Activated CD4-positive, alpha-beta T cell treated with anti-CD3 and anti-CD28 coated beads for 36 hours (primary cell): ENCODE measurements at regions of chr12 and their contacts with region 1.

Region 1: GRCh38 chr12:50111693-50112455 is at the start of gene COX14:
- DNase-seq: peak; percentile 99
- ATAC-seq: peak; percentile 91
- H3K4me3 Mint-ChIP-seq: peak within 1 kb of the TSS; percentile 100
- H3K27ac Mint-ChIP-seq: peak within 1 kb of the TSS; percentile 99
- H3K4me1 Mint-ChIP-seq: peaks cover 38% of the 10 kb centered on the region
- H3K27me3 Mint-ChIP-seq: no peaks in the 10 kb centered on the region
- total RNA-seq, gene COX14: 26.8 to 44.2 TPM

Region 2: DNA sequence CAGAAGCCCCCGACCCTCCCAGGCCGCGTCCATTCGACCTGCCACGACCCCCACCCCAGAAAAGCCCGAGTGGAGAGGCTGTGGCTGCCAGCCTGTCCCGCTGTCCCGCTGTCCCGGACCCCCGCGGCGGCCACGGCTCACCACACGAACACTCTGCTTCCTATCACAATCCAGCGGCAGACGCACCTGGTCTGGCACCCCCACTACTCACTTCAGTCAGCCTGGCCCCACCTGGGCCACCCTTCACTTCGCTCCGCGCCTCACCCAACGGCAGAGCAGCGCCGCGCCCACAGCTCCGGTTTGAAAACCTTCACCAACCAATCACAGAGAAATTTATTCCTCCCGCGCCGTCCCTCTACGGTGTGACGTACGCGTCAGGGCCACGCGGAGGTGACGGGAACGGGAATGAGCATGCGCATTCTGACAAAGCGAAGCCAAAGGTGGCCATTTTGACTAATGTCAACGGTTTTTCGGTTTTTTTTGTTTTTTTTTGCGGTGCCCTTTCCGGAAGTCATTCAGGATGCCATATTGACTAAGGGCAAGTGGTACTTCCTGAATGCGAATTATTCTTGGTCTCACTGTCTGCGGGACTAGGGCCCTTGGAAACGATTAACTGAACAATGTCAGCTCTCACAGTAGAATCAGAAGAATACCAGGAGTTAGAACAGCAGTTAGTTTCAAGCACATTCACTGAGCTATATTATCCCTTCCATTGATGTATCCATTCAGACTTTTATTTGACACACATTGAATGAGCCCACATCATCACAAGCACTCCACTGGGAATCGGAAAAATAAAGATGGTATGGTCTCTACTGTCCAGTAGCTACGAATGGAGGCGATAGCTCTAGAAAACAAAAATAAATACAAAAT is 86.5 kb before region 1 on chr12 and contains the start of gene RACGAP1:
- CTCF ChIA-PET with region 1: interaction called, 4 read pairs
- POLR2A ChIA-PET with region 1: interaction called, 4 read pairs
- intact Hi-C with region 1: loop called (anchors 1 kb)
- DNase-seq: peak; percentile 97
- ATAC-seq: peak; percentile 98
- H3K4me3 Mint-ChIP-seq: peak within 1 kb of the TSS; percentile 90
- H3K27ac Mint-ChIP-seq: peak within 1 kb of the TSS; percentile 95
- H3K4me1 Mint-ChIP-seq: peaks cover 23% of the 10 kb centered on the region
- H3K27me3 Mint-ChIP-seq: no peaks in the 10 kb centered on the region
- total RNA-seq, gene RACGAP1: 99.7 to 118 TPM

Region 3: DNA sequence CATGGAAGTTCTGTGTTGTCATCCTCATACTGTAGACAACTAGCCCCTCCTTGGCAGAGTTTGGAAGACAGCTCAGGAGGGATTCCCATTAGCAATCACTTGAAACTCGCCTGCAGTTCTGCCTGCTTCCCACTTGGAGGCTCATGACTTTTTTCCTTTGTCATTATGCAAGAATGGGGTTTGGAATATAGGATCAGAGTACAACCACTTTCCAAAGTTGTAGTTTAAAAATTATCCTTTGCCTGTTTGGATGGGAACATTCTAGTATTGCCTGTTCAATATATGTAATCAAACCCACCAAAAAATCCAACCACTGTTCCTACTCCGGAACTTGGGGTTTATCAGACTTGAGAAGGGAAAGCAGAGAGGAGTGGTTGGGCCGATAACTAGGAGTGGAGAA is 10.2 kb before region 1 on chr12:
- CTCF ChIA-PET with region 1: interaction called, 58 read pairs
- POLR2A ChIA-PET with region 1: interaction called, 7 read pairs
- intact Hi-C with region 1: no loop called
- DNase-seq: no peak
- ATAC-seq: no peak
- H3K4me3 Mint-ChIP-seq: no peak overlapping the region
- H3K27ac Mint-ChIP-seq: no peak overlapping the region
- H3K4me1 Mint-ChIP-seq: no peaks in the 10 kb centered on the region
- H3K27me3 Mint-ChIP-seq: no peaks in the 10 kb centered on the region

Region 4: DNA sequence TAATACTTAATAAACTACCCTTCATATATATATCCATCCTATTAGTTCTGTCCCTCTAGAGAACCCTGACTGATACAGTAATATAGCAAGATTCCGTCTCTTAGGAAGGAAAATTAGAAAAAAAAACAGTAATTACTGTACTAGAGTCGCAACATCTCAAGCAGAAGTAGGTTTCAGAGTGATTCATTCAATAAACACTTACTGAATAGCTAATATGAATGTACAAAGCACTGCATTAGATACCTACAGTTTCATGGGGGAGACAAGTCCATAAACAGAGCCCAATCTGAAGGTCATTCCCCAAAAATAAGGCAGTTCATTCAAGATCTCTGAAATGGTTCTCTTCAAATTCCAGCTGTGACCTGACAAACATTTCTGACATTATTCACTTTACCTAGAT is 45.4 kb after region 1 on chr12:
- CTCF ChIA-PET with region 1: interaction called, 10 read pairs
- POLR2A ChIA-PET with region 1: no interaction called
- intact Hi-C with region 1: no loop called
- DNase-seq: no peak
- ATAC-seq: peak; percentile 72
- H3K4me3 Mint-ChIP-seq: no peak overlapping the region
- H3K27ac Mint-ChIP-seq: peak overlapping the region; percentile 17
- H3K4me1 Mint-ChIP-seq: peaks cover 32% of the 10 kb centered on the region
- H3K27me3 Mint-ChIP-seq: no peaks in the 10 kb centered on the region

Region 5: GRCh38 chr12:50283229-50283923 is 171.5 kb after region 1 on chr12 and contains the start of gene LIMA1:
- CTCF ChIA-PET with region 1: interaction called, 4 read pairs
- POLR2A ChIA-PET with region 1: no interaction called
- intact Hi-C with region 1: loop called in 1 of 2 experiments (anchors 1 kb)
- DNase-seq: peak; percentile 96
- ATAC-seq: peak; percentile 98
- H3K4me3 Mint-ChIP-seq: peak within 1 kb of the TSS; percentile 91
- H3K27ac Mint-ChIP-seq: peak within 1 kb of the TSS; percentile 88
- H3K4me1 Mint-ChIP-seq: peaks cover 20% of the 10 kb centered on the region
- H3K27me3 Mint-ChIP-seq: no peaks in the 10 kb centered on the region
- total RNA-seq, gene LIMA1: 69.7 to 90.4 TPM

Region 6: DNA sequence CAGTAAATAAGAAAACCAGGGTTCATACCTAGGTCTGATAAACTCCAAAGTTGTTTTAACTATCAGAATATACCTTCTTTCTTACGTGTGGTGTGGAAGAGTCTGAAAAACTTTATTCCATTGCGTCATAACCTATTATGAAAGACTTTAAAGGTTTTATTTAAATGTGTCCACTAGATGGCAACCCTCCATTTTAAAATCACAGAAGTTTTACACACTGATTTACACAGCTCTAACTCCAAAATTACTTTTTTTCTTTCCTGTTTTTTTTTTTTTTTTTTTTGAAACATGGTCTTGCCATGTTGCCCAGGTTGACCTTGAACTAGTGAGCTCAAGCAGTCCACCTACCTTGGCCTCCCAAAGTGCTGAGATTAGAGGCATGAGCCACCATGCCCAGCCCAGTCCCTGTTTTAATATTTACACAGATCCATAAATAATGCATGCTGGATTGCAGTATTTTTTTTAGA is 713.5 kb after region 1 on chr12:
- CTCF ChIA-PET with region 1: no interaction called
- POLR2A ChIA-PET with region 1: no interaction called
- intact Hi-C with region 1: no loop called
- DNase-seq: no peak
- ATAC-seq: peak; percentile 61
- H3K4me3 Mint-ChIP-seq: no peak overlapping the region
- H3K27ac Mint-ChIP-seq: peak overlapping the region; percentile 35
- H3K4me1 Mint-ChIP-seq: peaks cover 6% of the 10 kb centered on the region
- H3K27me3 Mint-ChIP-seq: no peaks in the 10 kb centered on the region

Region 7: DNA sequence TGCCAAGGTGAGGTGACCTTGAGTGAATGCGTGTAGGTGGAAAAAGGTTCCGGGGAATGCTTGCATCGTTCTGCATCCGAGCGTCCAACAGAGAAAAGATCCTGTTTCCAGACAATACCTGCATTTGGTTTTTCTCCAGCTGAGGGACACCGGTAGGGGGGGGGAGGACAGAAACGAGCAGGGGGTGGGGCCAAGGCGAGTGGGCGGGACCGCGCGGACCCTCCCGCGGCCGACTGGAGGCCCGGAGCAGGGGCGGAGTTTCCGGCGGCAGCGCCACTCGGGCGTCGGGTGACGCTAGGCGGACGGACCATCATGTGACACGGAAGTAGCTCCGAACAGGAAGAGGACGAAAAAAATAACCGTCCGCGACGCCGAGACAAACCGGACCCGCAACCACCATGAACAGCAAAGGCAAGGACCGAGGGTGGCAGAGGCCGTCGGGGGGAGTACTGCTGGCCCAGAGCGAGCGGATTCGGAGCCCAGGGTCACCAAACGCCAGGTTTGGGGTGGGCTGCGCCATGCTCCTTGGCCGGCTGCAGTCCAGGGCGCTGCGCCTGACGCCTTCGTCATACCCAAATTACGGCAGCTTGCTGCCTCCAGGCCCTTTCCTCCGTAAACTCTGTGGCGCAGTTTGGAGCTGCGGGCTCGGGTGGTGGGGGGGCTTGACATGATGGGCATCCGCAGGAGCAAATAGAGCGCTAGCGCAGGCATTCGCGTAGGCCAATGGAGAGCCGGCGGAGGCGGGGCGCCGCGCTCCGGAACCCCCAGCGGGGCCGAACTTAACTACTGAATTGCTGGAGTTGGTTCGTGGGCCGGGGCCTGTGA is 1126.8 kb after region 1 on chr12 and contains the start of gene DAZAP2:
- CTCF ChIA-PET with region 1: no interaction called
- POLR2A ChIA-PET with region 1: no interaction called
- intact Hi-C with region 1: loop called in 1 of 2 experiments (anchors 5 kb)
- DNase-seq: peak; percentile 98
- ATAC-seq: peak; percentile 92
- H3K4me3 Mint-ChIP-seq: peak within 1 kb of the TSS; percentile 87
- H3K27ac Mint-ChIP-seq: peak within 1 kb of the TSS; percentile 100
- H3K4me1 Mint-ChIP-seq: peaks cover 36% of the 10 kb centered on the region
- H3K27me3 Mint-ChIP-seq: no peaks in the 10 kb centered on the region
- total RNA-seq, gene DAZAP2: 94.8 to 95.2 TPM